ENCODE measurements at regions of chr9 and their contacts with region 1.

Region 1: DNA sequence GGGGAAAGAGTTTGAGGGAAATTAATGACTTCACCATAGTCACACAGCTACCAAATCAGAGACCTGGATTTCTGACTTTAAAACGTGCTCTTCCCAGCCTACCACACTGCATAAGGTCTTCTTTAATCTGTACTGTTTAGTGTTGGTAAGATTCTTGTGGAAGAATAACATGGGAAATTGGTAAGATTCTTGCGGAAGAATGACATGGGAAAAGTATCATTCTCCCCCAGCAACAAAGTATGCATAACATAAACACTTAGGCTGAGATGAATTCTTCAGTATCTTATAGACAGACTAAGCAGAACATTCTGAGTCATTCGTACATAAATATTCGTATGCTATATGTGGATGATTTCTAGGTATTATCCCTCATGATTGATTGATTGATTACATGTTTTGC is 170.4 kb downstream of the FOCAD start:
- DNase-seq: no peak
- ATAC-seq: no peak
- H3K4me3 ChIP-seq: no peak overlapping the region
- H3K4me3 Mint-ChIP-seq: no peak overlapping the region
- H3K27ac ChIP-seq: no peak overlapping the region
- H3K27ac Mint-ChIP-seq: no peak overlapping the region
- H3K4me1 ChIP-seq: no peaks in the 10 kb centered on the region
- H3K4me1 Mint-ChIP-seq: no peaks in the 10 kb centered on the region
- H3K27me3 ChIP-seq: no peaks in the 10 kb centered on the region
- H3K27me3 Mint-ChIP-seq: no peaks in the 10 kb centered on the region
- CTCF ChIP-seq: no peak

Region 2: DNA sequence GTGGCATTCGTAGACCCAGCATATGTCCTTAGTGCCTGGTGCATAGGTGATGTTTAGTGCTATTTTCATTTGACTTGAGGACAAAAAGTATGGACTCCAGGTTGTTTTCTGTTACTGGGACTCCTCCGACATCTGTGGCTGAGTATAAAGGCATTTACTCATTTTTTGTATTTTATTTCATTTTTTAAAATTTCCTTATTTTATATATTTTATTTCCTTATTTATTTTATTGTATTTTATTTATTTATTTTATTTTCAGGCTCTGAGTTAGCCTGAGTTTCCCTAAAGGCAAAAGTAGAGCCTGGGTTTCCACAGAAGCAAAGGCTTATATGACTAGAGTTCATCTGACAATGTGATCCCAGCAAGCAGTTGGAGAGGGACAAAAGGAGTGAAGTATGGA is 78.8 kb before region 1 on chr9:
- CTCF ChIA-PET with region 1: no interaction called
- POLR2A ChIA-PET with region 1: no interaction called
- intact Hi-C with region 1: loop called in 1 of 2 experiments (anchors 5 kb)
- DNase-seq: no peak
- ATAC-seq: no peak
- H3K4me3 ChIP-seq: no peak overlapping the region
- H3K4me3 Mint-ChIP-seq: no peak overlapping the region
- H3K27ac ChIP-seq: no peak overlapping the region
- H3K27ac Mint-ChIP-seq: no peak overlapping the region
- H3K4me1 ChIP-seq: no peaks in the 10 kb centered on the region
- H3K4me1 Mint-ChIP-seq: no peaks in the 10 kb centered on the region
- H3K27me3 ChIP-seq: no peaks in the 10 kb centered on the region
- H3K27me3 Mint-ChIP-seq: no peaks in the 10 kb centered on the region
- CTCF ChIP-seq: no peak

Measured in CD8-positive, alpha-beta T cell (primary cell).